ENCODE measurements at regions of chr15 and their contacts with region 1.

Region 1: DNA sequence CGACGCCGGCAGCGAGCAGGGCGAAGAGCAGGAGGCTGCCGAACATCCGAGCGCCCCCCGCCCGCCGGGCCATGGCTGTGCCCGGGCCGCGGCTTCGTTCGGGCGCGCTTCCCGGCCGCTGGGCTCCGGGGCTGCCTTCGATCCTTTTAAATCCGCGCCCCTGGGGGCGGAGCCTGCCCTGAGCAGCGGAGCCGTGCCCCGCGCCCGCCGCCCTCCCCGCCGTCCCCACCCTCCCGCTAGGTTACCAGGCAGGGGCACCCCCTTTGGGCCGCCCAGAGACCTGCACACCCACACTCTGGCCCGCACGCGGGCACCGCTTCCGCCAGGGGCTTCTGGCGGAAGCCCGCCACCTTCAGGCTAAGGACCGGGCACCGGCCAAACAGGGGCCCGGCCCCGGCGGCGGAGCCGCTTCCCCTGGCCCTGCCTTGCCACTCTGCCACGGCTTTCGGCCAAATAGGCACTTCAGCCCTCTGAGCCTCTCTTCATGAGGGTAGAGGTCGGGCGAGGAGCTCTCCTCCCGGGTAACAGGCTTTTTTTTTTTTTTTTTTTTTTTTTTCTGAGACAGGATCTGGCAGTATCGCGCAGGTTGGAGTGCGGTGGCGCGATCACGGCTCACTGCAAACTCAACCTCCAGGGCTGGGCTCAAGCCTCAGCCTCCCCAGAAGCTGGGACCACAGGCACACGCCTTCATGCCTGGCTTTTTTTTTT is at the start of gene NMB:
- DNase-seq: no peak
- H3K4me3 ChIP-seq: peak within 1 kb of the TSS; percentile 57
- CTCF ChIP-seq: peak; percentile 71

Region 2: GRCh38 chr15:84669726-84670125 is 11.5 kb after region 1 on chr15:
- CTCF ChIA-PET with region 1: interaction called, 17 read pairs
- POLR2A ChIA-PET with region 1: interaction called, 3 read pairs
- DNase-seq: no peak
- H3K4me3 ChIP-seq: no peak overlapping the region
- CTCF ChIP-seq: no peak

Region 3: DNA sequence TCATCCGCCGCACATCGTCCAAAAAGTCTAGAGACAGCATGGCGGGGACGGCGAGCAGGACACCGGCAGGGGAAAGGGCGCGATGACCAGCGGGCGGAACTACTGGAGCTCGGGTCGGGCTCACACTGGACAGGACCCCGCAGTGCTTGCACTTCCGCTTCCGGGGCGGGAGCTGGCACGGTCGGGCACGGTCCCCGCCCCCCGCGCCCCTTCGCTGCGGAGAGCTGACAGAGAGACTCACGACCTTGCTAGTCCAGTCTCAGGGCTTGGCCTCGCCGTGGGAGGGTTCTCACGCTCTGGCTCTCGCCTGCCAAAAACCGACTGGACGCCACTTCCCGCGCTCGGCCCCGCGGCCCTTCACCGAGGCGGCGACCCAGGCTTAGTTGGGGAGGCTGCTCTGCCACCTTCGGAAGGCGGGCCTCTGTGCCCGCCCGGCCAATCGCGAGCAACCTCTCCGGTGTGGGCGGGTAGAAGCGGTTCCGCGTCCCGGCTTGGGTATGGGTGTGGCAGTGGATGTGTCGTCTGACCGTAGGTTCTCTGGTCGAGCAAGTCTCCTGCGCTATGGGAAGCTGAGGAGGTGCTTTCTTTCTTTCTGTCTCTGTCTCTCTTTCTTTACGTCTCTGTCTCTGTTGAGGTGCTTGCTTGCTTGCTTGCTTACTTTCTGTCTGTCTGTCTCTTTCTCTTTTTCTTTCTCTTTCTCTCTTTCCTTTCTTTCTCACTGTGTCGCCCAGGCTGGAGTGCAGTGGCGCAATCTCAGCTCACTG is 58.0 kb after region 1 on chr15 and contains the start of gene SEC11A:
- CTCF ChIA-PET with region 1: interaction called, 11 read pairs
- POLR2A ChIA-PET with region 1: interaction called, 7 read pairs
- DNase-seq: no peak
- H3K4me3 ChIP-seq: peak within 1 kb of the TSS; percentile 97
- CTCF ChIP-seq: no peak

Region 4: DNA sequence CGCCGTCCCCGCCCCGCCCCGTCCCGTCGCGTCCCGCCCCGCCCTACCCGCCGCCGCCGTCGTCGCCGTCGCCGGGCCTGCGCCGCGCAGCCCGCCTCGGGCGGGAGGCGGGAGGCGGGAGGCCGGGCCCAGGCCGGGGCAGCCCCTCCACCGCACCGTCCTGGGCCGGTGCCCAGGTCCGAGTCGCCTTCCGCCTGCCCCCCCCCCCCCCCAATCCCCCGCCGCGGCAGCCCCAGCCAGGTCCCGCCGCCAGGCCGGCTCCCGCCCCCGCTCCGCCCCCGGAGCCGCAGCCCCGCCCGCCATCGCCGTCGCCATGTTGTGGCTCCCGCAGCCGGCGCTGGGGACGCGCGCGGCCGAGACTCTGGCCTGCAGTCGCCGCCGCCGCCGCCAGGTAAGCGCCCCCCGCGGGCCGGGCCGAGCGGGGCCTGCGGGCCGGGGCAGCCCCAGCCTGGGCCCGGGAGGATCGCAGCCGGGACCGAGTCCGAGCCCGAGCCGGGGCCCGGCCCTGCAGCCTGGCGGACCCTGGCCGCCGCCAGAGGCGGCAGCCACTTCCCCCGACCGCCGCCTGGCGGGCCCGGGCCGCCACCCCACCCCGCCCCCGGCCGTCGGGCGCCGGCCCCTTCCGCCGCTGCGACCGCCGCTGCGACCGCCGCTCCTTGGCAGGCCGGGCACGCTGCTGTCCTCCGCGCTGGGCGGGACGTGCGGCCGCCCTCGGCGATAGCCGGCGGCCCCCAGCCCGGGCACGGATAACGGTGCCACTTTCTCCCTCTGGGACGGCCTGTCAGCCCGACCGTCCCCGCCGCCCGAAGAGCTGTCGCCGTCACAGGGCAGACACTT is 90.3 kb after region 1 on chr15 and contains the start of gene ZNF592:
- CTCF ChIA-PET with region 1: interaction called, 10 read pairs
- POLR2A ChIA-PET with region 1: no interaction called
- DNase-seq: no peak
- H3K4me3 ChIP-seq: peak within 1 kb of the TSS; percentile 93
- CTCF ChIP-seq: peak; percentile 17

Measured in AG04449 (cell line).